PC-3 (cell line): ENCODE measurements at regions of chr2 and their contacts with region 1.

Region 1: GRCh38 chr2:38602732-38603401 is at the start of gene HNRNPLL:
- DNase-seq: peak; percentile 98
- ATAC-seq: peak; percentile 81
- H3K4me3 ChIP-seq: peak within 1 kb of the TSS; percentile 84
- H3K27ac ChIP-seq: peak within 1 kb of the TSS; percentile 62
- H3K4me1 ChIP-seq: peaks cover 37% of the 10 kb centered on the region
- H3K27me3 ChIP-seq: no peaks in the 10 kb centered on the region
- CTCF ChIP-seq: no peak
- total RNA-seq, gene HNRNPLL: 30.1 and 43.8 TPM in 2 replicates

Region 2: DNA sequence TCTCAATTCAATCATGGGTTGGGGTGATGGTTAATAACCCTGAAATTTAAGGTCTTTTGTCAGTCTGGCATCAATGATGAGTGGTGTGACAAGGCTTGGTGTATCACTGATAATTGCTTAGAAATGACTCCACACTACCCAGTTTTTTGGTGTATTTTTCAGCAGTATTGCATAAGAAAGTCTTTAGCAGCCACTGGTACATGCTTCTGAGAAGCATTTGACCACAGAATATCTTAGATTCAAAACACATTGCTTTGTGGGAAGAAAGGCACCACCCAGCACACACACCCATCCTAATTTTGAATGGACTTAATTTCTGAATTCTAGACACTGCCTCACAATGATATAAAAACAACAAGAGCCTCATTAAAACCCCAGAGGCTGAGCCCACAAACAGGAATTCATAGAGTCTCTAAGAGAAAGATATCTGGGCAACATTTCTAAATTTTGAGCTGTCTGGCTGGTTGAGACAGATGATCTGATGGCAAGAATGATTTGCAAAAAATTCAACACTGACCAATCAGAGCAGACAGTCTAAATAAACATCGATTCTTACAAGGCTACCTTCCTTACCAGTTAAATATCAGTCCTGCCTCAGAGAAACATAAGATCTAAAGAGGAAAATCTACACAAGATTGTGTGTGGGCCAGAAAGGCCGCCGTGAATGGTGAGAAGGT is 412.2 kb before region 1 on chr2:
- CTCF ChIA-PET with region 1: no interaction called
- POLR2A ChIA-PET with region 1: no interaction called
- intact Hi-C with region 1: no loop called
- DNase-seq: no peak
- ATAC-seq: no peak
- H3K4me3 ChIP-seq: no peak overlapping the region
- H3K27ac ChIP-seq: no peak overlapping the region
- H3K4me1 ChIP-seq: peaks cover 13% of the 10 kb centered on the region
- H3K27me3 ChIP-seq: no peaks in the 10 kb centered on the region
- CTCF ChIP-seq: no peak

Region 3: DNA sequence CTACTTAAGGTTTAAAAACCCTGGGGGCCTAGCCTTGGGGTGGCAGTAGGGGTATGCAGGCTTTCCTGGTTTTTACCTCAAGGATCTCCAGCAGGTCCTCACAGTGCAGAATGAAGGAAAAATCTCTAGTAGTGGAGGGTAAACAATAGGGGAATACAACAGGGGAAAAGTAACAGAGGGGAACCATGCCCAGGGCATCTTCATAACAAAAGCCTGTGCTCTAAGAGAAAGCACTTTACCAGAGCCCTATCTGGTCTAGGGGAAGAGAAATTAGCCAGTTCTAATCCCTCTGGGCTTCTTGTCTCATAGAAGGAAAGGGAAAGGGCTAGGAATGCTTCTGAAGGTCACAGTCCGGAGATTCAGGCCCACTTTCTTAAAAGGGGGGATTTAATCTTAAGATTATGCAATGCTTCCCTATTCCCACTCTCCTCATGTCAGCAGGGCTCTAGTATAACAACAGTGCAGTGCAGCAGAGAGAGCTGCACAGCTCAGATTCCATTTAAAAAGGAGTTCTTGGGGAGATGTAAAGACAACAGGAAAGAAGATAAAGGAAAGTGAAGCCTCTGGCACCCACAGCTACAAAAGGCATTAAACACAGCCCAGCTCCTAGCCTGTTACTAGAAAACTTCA is 377.9 kb before region 1 on chr2:
- CTCF ChIA-PET with region 1: no interaction called
- POLR2A ChIA-PET with region 1: no interaction called
- intact Hi-C with region 1: no loop called
- DNase-seq: no peak
- ATAC-seq: no peak
- H3K4me3 ChIP-seq: no peak overlapping the region
- H3K27ac ChIP-seq: no peak overlapping the region
- H3K4me1 ChIP-seq: 0 out of 2 replicates have a peak, but pooled peaks cover 4% of the 10 kb centered on the region
- H3K27me3 ChIP-seq: peaks cover 15% of the 10 kb centered on the region
- CTCF ChIP-seq: no peak

Region 4: GRCh38 chr2:38465789-38466127 is 137.1 kb before region 1 on chr2:
- CTCF ChIA-PET with region 1: no interaction called
- POLR2A ChIA-PET with region 1: no interaction called
- intact Hi-C with region 1: no loop called
- DNase-seq: peak; percentile 63
- ATAC-seq: no peak
- H3K4me3 ChIP-seq: no peak overlapping the region
- H3K27ac ChIP-seq: no peak overlapping the region
- H3K4me1 ChIP-seq: peaks cover 33% of the 10 kb centered on the region
- H3K27me3 ChIP-seq: no peaks in the 10 kb centered on the region
- CTCF ChIP-seq: peak; percentile 81

Region 5: GRCh38 chr2:38590053-38590452 is 12.8 kb before region 1 on chr2:
- CTCF ChIA-PET with region 1: interaction called, 4 read pairs
- POLR2A ChIA-PET with region 1: interaction called, 6 read pairs
- intact Hi-C with region 1: loop called (anchors 1 kb)
- DNase-seq: peak; percentile 25
- ATAC-seq: no peak
- H3K4me3 ChIP-seq: no peak overlapping the region
- H3K27ac ChIP-seq: no peak overlapping the region
- H3K4me1 ChIP-seq: peaks cover 41% of the 10 kb centered on the region
- H3K27me3 ChIP-seq: no peaks in the 10 kb centered on the region
- CTCF ChIP-seq: peak; percentile 56

Region 6: GRCh38 chr2:38702413-38702812 is 99.5 kb after region 1 on chr2:
- CTCF ChIA-PET with region 1: no interaction called
- POLR2A ChIA-PET with region 1: no interaction called
- intact Hi-C with region 1: no loop called
- DNase-seq: peak; percentile 20
- ATAC-seq: no peak
- H3K4me3 ChIP-seq: no peak overlapping the region
- H3K27ac ChIP-seq: no peak overlapping the region
- H3K4me1 ChIP-seq: peaks cover 13% of the 10 kb centered on the region; the same call in 1 of the 2 replicates
- H3K27me3 ChIP-seq: no peaks in the 10 kb centered on the region
- CTCF ChIP-seq: no peak